ENCODE measurements at regions of chr3 and their contacts with region 1.

Region 1: DNA sequence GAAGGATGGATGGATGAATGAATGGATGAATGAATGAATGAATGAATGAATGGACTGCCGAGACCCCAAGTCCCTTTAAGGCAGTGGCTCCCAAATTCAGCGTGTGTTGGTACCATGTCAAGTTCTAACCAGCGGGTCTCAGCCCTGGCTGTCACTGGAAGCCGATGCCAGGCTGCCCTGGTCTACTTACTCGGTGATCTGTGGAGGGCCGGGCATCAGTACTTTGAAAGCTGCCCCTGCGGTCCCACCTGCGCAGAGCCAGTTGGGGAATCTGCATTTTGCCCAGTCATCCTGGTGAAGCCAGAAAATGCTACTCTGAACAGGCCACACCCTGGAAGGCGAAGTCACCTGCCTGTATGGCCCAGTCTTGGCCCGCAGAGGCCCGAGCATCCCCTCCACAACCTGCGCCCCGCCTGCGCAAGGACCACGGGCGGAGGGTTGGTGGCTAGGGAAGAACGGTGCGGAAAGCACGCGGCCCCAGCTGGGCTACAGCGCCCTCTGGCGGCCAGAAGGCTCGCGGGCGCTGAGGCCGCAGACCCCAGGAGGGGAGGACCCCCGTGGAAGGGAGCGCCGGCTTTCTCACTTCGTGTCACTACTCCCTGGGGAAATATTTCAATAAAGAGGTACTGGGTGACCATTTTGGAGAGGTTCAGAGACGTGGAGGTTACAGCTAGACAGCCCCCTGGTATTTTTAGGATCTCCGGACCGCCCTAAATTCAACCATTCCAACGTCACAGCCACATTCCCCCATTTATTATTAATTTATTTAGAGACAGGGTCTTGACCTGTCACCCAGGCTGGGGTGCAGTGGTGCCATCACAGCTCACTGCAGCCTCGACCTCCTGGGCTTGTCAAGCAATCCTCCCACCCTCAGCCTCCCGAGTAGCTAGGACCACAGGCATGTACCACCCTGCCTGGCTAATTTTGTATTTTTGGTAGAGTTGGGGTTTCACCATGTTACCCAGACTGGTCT is 34.9 kb downstream of the PRKCD start:
- DNase-seq: peak; percentile 45 to 76 (median 65)
- H3K4me3 ChIP-seq: no peak overlapping the region
- H3K27ac ChIP-seq: no peak overlapping the region
- H3K4me1 ChIP-seq: peaks cover 12% of the 10 kb centered on the region
- H3K27me3 ChIP-seq: no peaks in the 10 kb centered on the region
- CTCF ChIP-seq: peak; percentile 94 to 98 (median 96)
- EP300 ChIP-seq: no peak
- POLR2A ChIP-seq: no peak

Region 2: DNA sequence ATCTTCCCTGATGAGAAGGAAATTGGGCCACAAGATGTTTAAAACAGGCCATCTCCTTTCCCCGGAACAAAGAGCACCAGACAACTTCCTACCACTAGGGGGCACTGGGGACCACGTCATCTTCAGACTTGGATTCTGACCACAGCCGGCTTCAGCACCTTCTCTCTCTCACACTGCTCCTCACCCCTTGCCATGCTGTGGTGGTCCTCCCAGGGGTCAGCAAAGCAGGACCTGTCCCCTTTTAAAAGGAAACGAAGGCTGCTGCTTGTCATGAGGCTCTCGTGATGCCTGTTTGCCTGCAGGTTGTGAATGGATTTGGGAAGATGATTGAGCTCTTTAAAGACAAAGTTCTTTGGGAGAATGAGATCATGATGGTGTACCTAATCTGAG is 81.9 kb before region 1 on chr3:
- intact Hi-C with region 1: loop called (anchors 2 to 5 kb)
- DNase-seq: peak; percentile 75 to 88 (median 83)
- H3K4me3 ChIP-seq: no peak overlapping the region
- H3K27ac ChIP-seq: peak overlapping the region in 1 of 2 donors; percentile 54
- H3K4me1 ChIP-seq: peaks cover 2% of the 10 kb centered on the region
- H3K27me3 ChIP-seq: no peaks in the 10 kb centered on the region
- CTCF ChIP-seq: peak; percentile 70 to 92 (median 90)
- EP300 ChIP-seq: no peak
- POLR2A ChIP-seq: peak; percentile 14